ENCODE measurements at regions of chr13 and their contacts with region 1.

Region 1: GRCh38 chr13:114101358-114102125 is 30.9 kb downstream of the RASA3 start:
- DNase-seq: no peak
- ATAC-seq: peak; percentile 5
- H3K4me3 Mint-ChIP-seq: no peak overlapping the region
- H3K27ac Mint-ChIP-seq: peak overlapping the region; percentile 46
- H3K4me1 Mint-ChIP-seq: peaks cover 65% of the 10 kb centered on the region
- H3K27me3 Mint-ChIP-seq: no peaks in the 10 kb centered on the region
- CTCF ChIP-seq: no peak

Region 2: DNA sequence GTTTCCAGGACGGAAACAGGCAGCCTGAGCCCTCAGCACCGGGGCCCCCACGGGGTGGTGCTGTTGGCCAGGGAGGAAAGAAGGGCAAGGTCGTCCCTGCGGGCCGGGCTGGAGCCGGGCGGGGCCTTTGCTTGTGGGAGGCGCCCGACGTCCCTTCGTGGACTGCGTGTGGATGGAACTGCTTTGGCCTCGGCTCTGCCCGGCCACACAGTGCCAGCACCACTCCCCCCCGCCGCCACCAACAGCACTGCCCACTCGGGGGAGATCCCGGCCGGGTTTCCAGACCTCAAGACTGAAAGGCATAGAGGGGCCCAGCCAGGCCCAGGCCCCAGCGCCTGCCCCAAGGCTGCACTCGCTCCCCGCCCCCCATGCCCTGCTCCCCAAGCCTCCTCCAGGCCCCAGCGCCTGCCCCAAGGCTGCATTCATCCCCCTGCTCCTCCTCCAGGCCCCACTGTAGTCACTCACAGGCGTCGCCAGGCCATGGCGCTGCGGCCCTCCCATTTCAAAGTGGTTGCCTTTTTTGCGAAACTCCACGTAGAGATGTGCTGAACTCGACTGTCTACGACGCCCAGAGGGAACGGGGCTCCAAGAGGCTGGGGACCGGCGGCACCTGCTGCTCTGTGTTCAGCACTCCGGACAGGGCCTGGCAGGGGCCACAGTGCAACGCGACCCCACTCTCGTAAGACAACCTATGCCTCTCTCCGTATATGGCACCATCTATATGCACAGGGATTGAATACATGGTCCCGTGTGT is 150.1 kb before region 1 on chr13:
- CTCF ChIA-PET with region 1: no interaction called
- POLR2A ChIA-PET with region 1: no interaction called
- intact Hi-C with region 1: no loop called
- DNase-seq: peak; percentile 74
- ATAC-seq: peak; percentile 89
- H3K4me3 Mint-ChIP-seq: no peak overlapping the region
- H3K27ac Mint-ChIP-seq: no peak overlapping the region
- H3K4me1 Mint-ChIP-seq: peaks cover 5% of the 10 kb centered on the region
- H3K27me3 Mint-ChIP-seq: no peaks in the 10 kb centered on the region
- CTCF ChIP-seq: peak; percentile 62

Region 3: GRCh38 chr13:114035583-114036531 is 65.7 kb before region 1 on chr13:
- CTCF ChIA-PET with region 1: no interaction called
- POLR2A ChIA-PET with region 1: no interaction called
- intact Hi-C with region 1: loop called (anchors 2 kb)
- DNase-seq: no peak
- ATAC-seq: no peak
- H3K4me3 Mint-ChIP-seq: no peak overlapping the region
- H3K27ac Mint-ChIP-seq: no peak overlapping the region
- H3K4me1 Mint-ChIP-seq: peaks cover 19% of the 10 kb centered on the region
- H3K27me3 Mint-ChIP-seq: no peaks in the 10 kb centered on the region
- CTCF ChIP-seq: no peak

Region 4: GRCh38 chr13:114264886-114265611 is 163.5 kb after region 1 on chr13:
- CTCF ChIA-PET with region 1: no interaction called
- POLR2A ChIA-PET with region 1: no interaction called
- intact Hi-C with region 1: no loop called
- DNase-seq: no peak
- ATAC-seq: no peak
- H3K4me3 Mint-ChIP-seq: no peak overlapping the region
- H3K27ac Mint-ChIP-seq: peak overlapping the region; percentile 1
- H3K4me1 Mint-ChIP-seq: peaks cover 47% of the 10 kb centered on the region
- H3K27me3 Mint-ChIP-seq: no peaks in the 10 kb centered on the region
- CTCF ChIP-seq: no peak